ENCODE measurements at regions of chr10 and their contacts with region 1.

Region 1: DNA sequence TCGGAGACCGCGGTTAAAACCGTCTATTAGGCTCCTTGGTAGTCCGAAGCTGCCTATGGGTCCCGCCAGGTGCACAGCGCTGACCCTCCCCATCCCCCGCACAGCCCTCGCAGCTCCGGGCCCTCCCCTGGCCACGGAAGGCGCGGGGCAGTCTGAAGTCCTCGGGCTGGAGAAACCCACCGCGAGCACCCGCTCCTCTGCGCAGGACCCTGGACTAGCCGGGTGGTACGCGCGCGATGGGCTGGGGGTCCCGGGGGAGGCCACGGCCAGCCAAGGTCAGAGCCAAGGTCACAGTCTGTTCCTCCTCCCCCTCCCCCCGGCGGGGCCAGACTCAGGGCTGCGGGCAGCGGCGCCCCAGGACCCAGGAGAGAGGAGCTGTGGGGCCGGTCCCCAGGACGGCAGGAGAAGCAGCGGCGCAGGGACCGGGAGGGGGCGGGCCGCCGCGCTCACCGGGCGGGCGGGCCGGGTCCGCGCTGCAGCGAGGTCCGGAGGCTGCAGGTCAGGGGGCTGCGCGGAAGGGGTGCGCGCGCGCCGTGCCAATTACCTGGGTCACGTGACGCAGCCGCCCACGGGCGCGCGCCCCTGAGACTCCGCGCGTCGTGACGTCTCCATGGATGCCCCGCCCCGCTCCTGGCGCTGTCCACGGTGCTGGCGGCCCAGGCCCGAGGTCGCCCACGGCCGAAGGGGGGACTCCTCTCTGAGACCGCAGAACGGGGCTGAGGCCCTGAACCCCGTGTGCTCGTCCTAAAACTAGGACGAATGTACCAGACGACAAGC is at the start of gene OGDHL:
- DNase-seq: peak; percentile 26
- ATAC-seq: peak; percentile 93
- H3K4me3 ChIP-seq: peak within 1 kb of the TSS; percentile 60 to 68
- H3K27ac ChIP-seq: peak within 1 kb of the TSS; percentile 67; the same call in 1 of the 2 replicates
- H3K4me1 ChIP-seq: peaks cover 0 to 9% of the 10 kb centered on the region in 2 experiments; a peak in 3 of 4 replicates
- H3K27me3 ChIP-seq: peaks cover 9% of the 10 kb centered on the region; the same call in 1 of the 2 replicates
- CTCF ChIP-seq: no peak
- POLR2A ChIP-seq: no peak
- RAD21 ChIP-seq: no peak
- total RNA-seq, gene OGDHL: 16.3 TPM

Region 2: DNA sequence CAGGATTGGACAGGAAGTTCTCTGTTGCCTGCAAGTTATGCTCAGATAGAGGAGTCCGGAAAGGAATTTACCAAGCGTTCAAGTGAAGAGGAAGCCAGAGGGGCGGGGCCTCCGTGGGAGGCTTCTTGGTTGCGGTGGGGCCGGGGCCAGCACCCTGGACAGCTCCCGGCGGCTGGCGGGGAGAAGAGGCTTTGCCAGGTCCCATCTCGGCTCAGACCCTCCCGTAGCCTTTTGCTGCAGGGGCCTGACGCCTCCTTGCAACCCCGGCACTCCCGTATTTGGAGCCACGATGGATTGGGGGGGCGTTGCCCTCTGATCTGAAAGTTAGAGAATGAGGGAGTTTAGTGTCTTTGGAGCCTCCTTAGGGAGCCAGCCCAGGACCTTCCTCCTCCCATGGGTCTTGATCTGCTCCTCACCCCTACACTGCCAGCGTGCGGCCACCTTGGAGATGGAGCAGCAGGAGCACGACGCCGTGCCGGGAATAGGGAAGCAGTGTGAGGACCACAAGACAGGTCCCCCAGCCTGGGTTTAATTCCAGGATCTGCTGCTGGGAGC is 154.9 kb before region 1 on chr10:
- CTCF ChIA-PET with region 1: no interaction called
- POLR2A ChIA-PET with region 1: no interaction called
- RAD21 ChIA-PET with region 1: no interaction called
- intact Hi-C with region 1: loop called (anchors 5 kb)
- DNase-seq: no peak
- ATAC-seq: peak; percentile 88
- H3K4me3 ChIP-seq: no peak overlapping the region
- H3K27ac ChIP-seq: no peak overlapping the region
- H3K4me1 ChIP-seq: no peaks in the 10 kb centered on the region
- H3K27me3 ChIP-seq: peaks cover 27% of the 10 kb centered on the region
- CTCF ChIP-seq: no peak
- POLR2A ChIP-seq: no peak
- RAD21 ChIP-seq: no peak

Measured in HCT116 (cell line).